Pancreas (tissue), 10 donors: ENCODE measurements at regions of chr16 and their contacts with region 1.

Region 1: GRCh38 chr16:88561485-88562369 is 8.5 kb upstream of the ZC3H18 start:
- DNase-seq: peak in 2 of 6 donors; percentile 56 to 59
- ATAC-seq: peak; percentile 37 to 86 (median 75)
- H3K4me3 ChIP-seq: no peak overlapping the region
- H3K27ac ChIP-seq: no peak overlapping the region
- H3K4me1 ChIP-seq: peaks cover 0 to 6% (median 0%) of the 10 kb centered on the region in 3 donors
- H3K27me3 ChIP-seq: no peaks in the 10 kb centered on the region
- CTCF ChIP-seq: peak; percentile 38 to 49 (median 44)

Region 2: DNA sequence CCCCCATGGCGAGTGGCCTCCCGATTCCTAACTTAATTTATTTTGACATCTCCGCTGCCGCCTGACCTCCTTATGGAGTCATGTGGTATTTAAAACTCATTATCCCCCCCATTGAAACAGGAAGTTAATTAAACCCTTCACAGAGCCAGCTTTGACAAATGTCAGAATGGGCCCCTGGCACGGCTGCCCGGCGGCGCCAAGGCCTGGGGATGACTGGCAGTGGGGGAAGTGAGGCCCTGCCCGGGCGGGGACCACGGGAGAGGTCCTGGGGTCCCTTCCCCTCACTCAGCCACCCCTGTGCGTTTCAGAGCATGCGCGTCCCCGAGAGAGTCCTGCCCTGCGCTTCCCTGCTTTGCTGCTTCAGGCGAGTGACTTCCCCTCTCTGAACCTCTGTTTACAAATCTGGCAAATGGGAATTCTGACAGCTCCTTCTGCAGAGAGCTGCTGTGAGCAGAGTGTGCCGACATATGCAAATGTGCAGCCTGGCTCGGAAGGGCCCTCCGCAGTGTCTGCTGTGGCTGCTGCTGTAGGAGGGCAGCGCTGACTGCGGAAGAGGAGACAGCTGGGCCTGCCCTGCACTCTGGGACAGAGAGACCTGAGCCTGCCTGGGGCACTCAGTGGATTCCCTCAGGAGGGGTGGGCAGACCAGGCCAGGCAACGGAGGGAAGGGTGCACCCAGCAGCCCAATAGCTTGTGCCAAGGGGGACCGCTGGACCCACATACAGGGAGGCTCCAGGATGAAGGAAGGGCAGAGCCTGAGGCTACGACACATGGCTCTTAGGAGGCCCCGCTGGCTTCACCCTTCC is 113.1 kb before region 1 on chr16:
- intact Hi-C with region 1: loop called in 2 of 3 experiments (anchors 5 to 10 kb)
- DNase-seq: no peak
- ATAC-seq: no peak
- H3K4me3 ChIP-seq: no peak overlapping the region
- H3K27ac ChIP-seq: no peak overlapping the region
- H3K4me1 ChIP-seq: peaks cover 0 to 6% (median 0%) of the 10 kb centered on the region in 3 donors
- H3K27me3 ChIP-seq: no peaks in the 10 kb centered on the region
- CTCF ChIP-seq: no peak